ENCODE measurements at regions of chr2 and their contacts with region 1.

Region 1: GRCh38 chr2:43356774-43357173 is 130.4 kb upstream of the ZFP36L2 start:
- DNase-seq: no peak
- H3K4me3 ChIP-seq: no peak overlapping the region
- H3K27ac ChIP-seq: peak overlapping the region in 1 of 4 donors; percentile 69
- H3K4me1 ChIP-seq: peaks cover 8 to 66% (median 41%) of the 10 kb centered on the region in 4 donors
- H3K27me3 ChIP-seq: no peaks in the 10 kb centered on the region
- CTCF ChIP-seq: no peak
- EP300 ChIP-seq: no peak
- POLR2A ChIP-seq: no peak

Region 2: GRCh38 chr2:42638080-42638784 is 718.5 kb before region 1 on chr2:
- intact Hi-C with region 1: no loop called
- DNase-seq: no peak
- H3K4me3 ChIP-seq: no peak overlapping the region
- H3K27ac ChIP-seq: no peak overlapping the region
- H3K4me1 ChIP-seq: peaks cover 0 to 9% (median 3%) of the 10 kb centered on the region in 4 donors
- H3K27me3 ChIP-seq: no peaks in the 10 kb centered on the region
- CTCF ChIP-seq: no peak
- EP300 ChIP-seq: no peak
- POLR2A ChIP-seq: no peak

Region 3: DNA sequence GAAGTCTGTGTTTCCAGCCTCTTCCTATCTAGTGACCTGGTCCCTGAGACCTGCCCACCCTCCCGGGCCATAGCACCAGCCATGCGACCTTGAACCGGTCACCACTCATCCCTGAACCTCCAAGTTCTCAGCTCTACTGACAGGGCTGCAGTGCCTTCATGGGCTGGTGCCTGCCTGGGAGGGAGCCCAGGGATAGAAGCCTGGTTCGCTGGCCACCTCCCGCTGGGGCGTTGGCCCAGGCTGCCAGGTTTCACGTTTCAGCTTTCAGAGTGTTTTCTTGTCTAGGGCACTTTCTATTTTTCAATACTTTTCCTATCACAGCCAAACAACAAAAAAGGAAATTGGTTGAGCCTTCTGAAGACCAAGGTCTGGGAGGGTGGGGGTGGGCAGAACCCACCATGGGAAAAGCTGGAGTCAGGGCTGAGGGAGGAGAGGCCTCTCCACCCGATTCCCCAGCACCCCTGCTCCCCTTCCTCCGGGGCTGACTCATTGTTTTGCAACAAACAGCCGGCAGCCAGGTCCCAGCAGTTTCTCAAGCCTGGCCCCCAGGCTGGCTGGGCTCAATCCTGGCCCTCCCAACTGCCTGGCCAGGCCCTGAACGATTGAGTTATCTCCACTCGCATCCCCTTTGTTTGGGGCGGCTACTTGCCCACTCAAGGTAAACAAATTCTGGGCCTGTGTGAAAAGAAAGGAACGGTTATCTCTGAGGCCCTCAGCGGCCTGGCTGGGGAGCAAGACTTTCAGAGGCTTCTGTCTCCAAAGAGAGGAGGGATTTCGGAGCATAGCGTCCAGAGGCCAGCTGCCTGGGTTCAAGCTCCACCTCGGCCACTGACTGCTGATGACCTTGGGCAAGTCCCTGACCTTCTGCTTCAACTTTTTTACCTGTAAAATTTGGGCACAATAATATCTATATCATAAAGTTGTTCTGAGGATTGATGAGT is 177.9 kb before region 1 on chr2:
- intact Hi-C with region 1: no loop called
- DNase-seq: peak; percentile 93
- H3K4me3 ChIP-seq: no peak overlapping the region
- H3K27ac ChIP-seq: peak overlapping the region; percentile 60 to 73 (median 68)
- H3K4me1 ChIP-seq: peaks cover 17 to 30% (median 22%) of the 10 kb centered on the region in 4 donors
- H3K27me3 ChIP-seq: no peaks in the 10 kb centered on the region
- CTCF ChIP-seq: no peak
- EP300 ChIP-seq: no peak
- POLR2A ChIP-seq: no peak

Region 4: DNA sequence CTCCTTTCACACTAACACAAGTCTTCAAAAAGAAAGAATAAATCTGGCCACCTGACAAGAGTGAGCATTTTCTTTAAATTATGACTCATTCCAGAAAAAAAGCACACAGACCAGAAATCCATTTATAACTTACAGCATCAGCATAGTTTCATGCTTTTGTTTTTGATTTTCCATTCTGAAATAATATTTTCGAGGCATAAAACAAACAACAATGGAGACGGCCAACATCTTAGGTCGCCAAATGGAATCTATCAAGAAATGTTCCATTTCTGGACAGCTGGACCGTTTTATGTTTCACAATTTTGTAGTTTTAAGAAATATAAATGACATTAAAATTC is 35.1 kb after region 1 on chr2:
- intact Hi-C with region 1: loop called (anchors 1 kb)
- DNase-seq: no peak
- H3K4me3 ChIP-seq: no peak overlapping the region
- H3K27ac ChIP-seq: peak overlapping the region; percentile 58 to 77 (median 66)
- H3K4me1 ChIP-seq: peaks cover 10 to 65% (median 53%) of the 10 kb centered on the region in 4 donors
- H3K27me3 ChIP-seq: no peaks in the 10 kb centered on the region
- CTCF ChIP-seq: no peak
- EP300 ChIP-seq: no peak
- POLR2A ChIP-seq: no peak

Region 5: DNA sequence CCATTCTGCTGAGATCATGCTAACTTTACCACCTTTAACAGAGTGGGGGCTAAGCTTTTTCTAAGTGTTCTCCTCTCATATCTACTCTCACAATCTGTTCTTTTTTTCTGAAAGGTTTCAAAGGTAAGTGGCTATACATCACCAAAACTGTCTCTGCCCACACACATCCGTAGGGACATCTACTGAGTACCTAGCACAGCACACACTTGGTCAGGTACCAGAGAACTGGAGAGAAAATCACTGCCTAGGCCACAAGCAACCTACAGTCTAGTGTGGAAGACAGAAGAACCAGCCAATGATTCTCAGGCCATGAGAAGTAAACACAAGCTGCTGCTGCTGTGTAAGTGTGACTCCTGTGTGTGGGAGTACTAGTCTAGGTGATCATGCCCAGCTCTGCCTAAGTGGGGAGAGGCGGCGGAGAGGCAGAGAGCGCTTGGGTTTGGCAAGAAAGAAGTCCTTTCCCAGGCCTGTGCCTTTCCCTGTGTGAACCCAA is 45.7 kb after region 1 on chr2:
- intact Hi-C with region 1: no loop called
- DNase-seq: no peak
- H3K4me3 ChIP-seq: no peak overlapping the region
- H3K27ac ChIP-seq: peak overlapping the region in 3 of 4 donors; percentile 3 to 79 (median 10)
- H3K4me1 ChIP-seq: peaks cover 35 to 82% (median 58%) of the 10 kb centered on the region in 4 donors
- H3K27me3 ChIP-seq: no peaks in the 10 kb centered on the region
- CTCF ChIP-seq: no peak
- EP300 ChIP-seq: no peak
- POLR2A ChIP-seq: no peak